Activated CD4-positive, alpha-beta T cell treated with anti-CD3 and anti-CD28 coated beads for 36 hours (primary cell): ENCODE measurements at regions of chrX and their contacts with region 1.

Region 1: DNA sequence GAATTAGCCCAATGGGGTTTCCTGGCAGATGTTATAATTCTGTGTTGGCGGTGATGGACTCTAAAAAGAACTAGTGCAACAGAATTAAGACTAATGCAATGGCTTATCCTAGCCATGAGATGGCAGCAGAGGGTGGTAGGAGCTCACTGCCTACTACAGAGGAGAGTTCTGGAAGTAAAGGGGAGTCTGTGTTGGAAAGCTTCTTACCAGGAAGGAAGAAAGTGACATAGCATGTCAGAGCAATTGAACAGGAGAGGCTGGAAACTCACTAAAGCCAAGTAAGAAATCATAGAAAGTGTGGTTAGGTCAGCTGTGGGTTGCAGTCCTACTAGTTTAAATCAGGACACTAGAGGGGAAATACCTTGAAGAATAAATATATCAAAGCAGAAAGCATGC is 6.3 kb upstream of the TRPC5OS start:
- DNase-seq: peak; percentile 15
- ATAC-seq: no peak
- H3K4me3 Mint-ChIP-seq: no peak overlapping the region
- H3K27ac Mint-ChIP-seq: no peak overlapping the region
- H3K4me1 Mint-ChIP-seq: peaks cover 2% of the 10 kb centered on the region
- H3K27me3 Mint-ChIP-seq: peaks cover 14% of the 10 kb centered on the region

Region 2: GRCh38 chrX:112043997-112044396 is 174.4 kb after region 1 on chrX:
- CTCF ChIA-PET with region 1: no interaction called
- POLR2A ChIA-PET with region 1: no interaction called
- intact Hi-C with region 1: loop called (anchors 2 to 10 kb)
- DNase-seq: no peak
- ATAC-seq: no peak
- H3K4me3 Mint-ChIP-seq: no peak overlapping the region
- H3K27ac Mint-ChIP-seq: no peak overlapping the region
- H3K4me1 Mint-ChIP-seq: no peaks in the 10 kb centered on the region
- H3K27me3 Mint-ChIP-seq: no peaks in the 10 kb centered on the region

Region 3: DNA sequence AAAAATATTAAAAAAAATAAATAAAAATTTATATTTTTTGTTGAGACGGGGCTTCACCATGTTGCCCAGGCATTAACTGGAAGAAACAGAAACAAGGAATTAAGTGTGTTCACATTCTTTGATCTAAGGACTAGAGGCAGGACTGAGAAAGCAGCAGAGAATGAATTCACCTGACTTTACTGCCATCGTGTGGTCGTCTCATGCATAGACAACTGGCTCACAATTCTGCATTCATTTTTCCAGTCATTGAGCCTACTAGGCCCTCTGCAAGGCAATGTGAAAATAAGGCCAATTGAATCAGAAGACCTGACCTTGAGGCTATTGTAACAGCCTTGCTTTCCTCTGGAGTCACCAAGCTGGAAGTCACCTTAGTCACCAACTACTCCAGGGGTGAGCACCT is 772.7 kb after region 1 on chrX:
- CTCF ChIA-PET with region 1: no interaction called
- POLR2A ChIA-PET with region 1: no interaction called
- intact Hi-C with region 1: loop called in 1 of 2 experiments (anchors 2 kb)
- DNase-seq: peak; percentile 17
- ATAC-seq: peak; percentile 21
- H3K4me3 Mint-ChIP-seq: no peak overlapping the region
- H3K27ac Mint-ChIP-seq: no peak overlapping the region
- H3K4me1 Mint-ChIP-seq: peaks cover 27% of the 10 kb centered on the region
- H3K27me3 Mint-ChIP-seq: no peaks in the 10 kb centered on the region

Region 4: DNA sequence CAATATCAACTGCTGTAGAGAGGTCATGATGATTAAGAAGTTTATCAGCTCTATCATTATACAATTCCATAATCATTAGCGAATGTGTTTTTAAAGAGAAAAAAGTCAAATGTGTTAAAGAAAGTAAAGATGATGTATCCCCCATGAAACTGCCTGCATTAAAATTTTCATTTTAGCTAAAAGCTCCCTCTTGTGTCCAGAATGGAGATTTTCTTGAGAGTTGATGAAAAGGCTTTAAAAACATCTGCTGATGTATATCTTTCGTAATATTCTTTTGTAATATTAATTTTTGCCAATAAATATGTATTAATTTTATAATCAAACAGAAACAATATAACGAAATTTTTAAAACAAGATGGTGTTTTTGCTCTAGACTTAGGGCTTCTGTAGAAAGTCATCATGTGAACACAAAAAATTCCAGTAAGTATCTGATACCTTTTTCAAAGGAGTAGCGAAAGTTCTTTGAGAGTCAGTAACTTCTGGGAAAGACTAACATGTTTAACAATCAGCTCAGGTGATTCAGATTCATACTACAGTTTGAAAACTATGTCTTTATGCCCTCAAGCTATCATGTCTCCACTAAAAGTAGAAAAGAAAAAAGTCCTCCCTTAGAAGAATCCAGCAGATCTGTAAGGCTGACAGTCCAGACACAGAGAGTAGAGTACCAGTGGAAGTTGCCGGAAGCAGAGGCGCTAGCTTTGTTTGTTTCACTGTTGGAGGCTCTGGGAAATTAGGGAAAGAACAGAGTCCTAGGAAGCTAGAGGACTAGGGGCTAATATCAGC is 862.3 kb after region 1 on chrX:
- CTCF ChIA-PET with region 1: no interaction called
- POLR2A ChIA-PET with region 1: no interaction called
- intact Hi-C with region 1: loop called in 1 of 2 experiments (anchors 10 kb)
- DNase-seq: no peak
- ATAC-seq: no peak
- H3K4me3 Mint-ChIP-seq: no peak overlapping the region
- H3K27ac Mint-ChIP-seq: no peak overlapping the region
- H3K4me1 Mint-ChIP-seq: peaks cover 5% of the 10 kb centered on the region
- H3K27me3 Mint-ChIP-seq: peaks cover 5% of the 10 kb centered on the region